Calu3 (cell line): ENCODE measurements at regions of chr17 and their contacts with region 1.

Region 1: DNA sequence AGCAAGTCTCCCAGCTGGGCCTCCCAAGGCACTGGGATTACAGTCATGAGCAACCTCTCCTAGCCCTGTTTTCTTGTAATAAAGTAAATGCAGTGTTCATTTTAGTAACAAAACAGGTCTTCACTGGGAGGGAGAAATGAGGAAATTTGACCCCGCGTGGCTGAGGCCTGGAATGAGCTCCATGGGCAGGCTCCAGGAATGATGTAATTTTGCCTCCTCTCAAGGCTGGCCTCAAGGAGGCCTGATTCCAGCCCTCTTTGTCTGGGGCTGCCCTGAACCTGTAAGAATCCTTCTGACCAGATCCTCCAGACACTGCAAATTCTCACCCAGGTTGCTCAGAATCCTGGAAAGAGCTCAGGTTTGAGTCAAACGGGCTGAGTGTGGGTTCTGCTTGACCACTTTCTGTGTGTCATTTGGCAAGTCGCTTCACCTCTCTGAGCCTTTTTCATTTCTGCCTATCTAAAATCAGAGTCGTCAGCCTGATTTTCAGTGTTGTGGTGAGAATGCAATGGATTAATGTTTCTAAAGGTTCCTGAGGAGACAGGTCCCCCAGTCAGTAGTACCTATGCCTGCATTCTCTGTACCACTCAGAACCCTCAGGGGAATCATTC is 57.1 kb downstream of the RAB11FIP4 start:
- DNase-seq: peak; percentile 18
- H3K4me3 Mint-ChIP-seq: no peak overlapping the region
- H3K27ac Mint-ChIP-seq: no peak overlapping the region
- H3K4me1 Mint-ChIP-seq: peaks cover 36% of the 10 kb centered on the region
- H3K27me3 Mint-ChIP-seq: no peaks in the 10 kb centered on the region
- CTCF ChIP-seq: no peak

Region 2: DNA sequence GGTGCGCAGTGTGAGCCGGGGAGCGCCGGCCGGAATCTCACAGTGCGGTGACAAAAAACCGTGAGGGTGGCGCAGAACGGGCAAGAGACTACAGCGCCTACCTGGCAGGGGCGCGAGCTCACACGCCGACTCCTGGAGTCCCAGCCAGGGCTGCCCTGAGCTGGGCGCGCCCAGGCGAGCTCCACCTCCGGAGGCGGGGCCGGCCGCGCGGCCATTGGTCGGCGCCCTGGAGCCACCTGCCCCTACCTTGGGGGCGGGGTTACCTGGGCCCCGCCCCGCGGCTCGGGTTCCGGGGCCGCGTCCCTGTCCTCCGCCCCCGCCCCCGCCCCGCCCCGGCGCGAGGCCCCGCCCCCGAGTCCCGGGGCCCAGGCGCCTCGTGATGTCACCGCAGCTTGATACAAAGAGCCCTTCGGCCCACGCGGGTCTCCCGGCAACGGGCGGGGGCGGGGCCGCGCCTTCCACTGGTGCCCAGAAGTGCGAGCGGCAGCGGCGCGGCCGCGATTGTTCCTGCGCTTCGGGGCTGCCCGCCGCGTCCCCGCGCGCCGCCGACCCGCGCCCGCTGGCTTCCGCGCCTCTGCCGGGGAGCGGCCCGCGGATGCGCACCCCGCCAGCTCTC is 39.2 kb after region 1 on chr17:
- CTCF ChIA-PET with region 1: interaction called, 6 read pairs
- intact Hi-C with region 1: loop called (anchors 5 kb)
- DNase-seq: peak; percentile 94
- H3K4me3 Mint-ChIP-seq: peak overlapping the region; percentile 72
- H3K27ac Mint-ChIP-seq: no peak overlapping the region
- H3K4me1 Mint-ChIP-seq: peaks cover 33% of the 10 kb centered on the region
- H3K27me3 Mint-ChIP-seq: peaks cover 13% of the 10 kb centered on the region
- CTCF ChIP-seq: no peak

Region 3: GRCh38 chr17:31499771-31500554 is 51.4 kb after region 1 on chr17:
- CTCF ChIA-PET with region 1: no interaction called
- intact Hi-C with region 1: no loop called
- DNase-seq: peak; percentile 69
- H3K4me3 Mint-ChIP-seq: no peak overlapping the region
- H3K27ac Mint-ChIP-seq: no peak overlapping the region
- H3K4me1 Mint-ChIP-seq: peaks cover 29% of the 10 kb centered on the region
- H3K27me3 Mint-ChIP-seq: no peaks in the 10 kb centered on the region
- CTCF ChIP-seq: no peak

Region 4: GRCh38 chr17:31524926-31525800 is 76.6 kb after region 1 on chr17:
- CTCF ChIA-PET with region 1: no interaction called
- intact Hi-C with region 1: loop called (anchors 2 kb)
- DNase-seq: peak; percentile 95
- H3K4me3 Mint-ChIP-seq: no peak overlapping the region
- H3K27ac Mint-ChIP-seq: no peak overlapping the region
- H3K4me1 Mint-ChIP-seq: no peaks in the 10 kb centered on the region
- H3K27me3 Mint-ChIP-seq: no peaks in the 10 kb centered on the region
- CTCF ChIP-seq: peak; percentile 93